Transverse colon (tissue), 4 donors: ENCODE measurements at regions of chr14 and their contacts with region 1.

Region 1: DNA sequence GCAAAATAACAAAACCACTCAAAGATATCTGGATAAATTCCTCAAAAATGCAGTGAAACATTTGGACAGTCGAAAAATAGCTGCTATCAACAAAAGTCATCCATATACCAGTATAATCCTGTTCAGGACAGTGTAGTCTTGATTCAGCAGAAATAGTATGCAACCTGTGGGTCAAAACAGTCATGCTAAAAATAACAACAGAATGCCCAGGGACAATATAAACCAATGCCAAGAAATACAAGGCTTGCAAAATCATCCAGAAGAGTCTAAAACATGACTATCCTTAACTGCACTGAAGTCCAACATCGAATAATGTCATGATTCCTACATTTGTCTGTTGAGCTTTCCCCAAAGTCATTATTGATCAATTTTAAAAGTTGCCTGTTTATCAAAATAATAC is 425.9 kb downstream of the FSCB start:
- DNase-seq: no peak
- H3K4me3 ChIP-seq: no peak overlapping the region
- H3K27ac ChIP-seq: no peak overlapping the region
- H3K4me1 ChIP-seq: no peaks in the 10 kb centered on the region
- H3K27me3 ChIP-seq: no peaks in the 10 kb centered on the region
- CTCF ChIP-seq: no peak
- EP300 ChIP-seq: no peak
- POLR2A ChIP-seq: no peak

Region 2: GRCh38 chr14:42854061-42854460 is 1227.1 kb before region 1 on chr14:
- in situ Hi-C with region 1: no loop called
- intact Hi-C with region 1: loop called (anchors 5 kb)
- DNase-seq: no peak
- H3K4me3 ChIP-seq: no peak overlapping the region
- H3K27ac ChIP-seq: no peak overlapping the region
- H3K4me1 ChIP-seq: no peaks in the 10 kb centered on the region
- H3K27me3 ChIP-seq: no peaks in the 10 kb centered on the region
- CTCF ChIP-seq: no peak
- EP300 ChIP-seq: no peak
- POLR2A ChIP-seq: no peak

Region 3: GRCh38 chr14:44135972-44136371 is 54.8 kb after region 1 on chr14:
- in situ Hi-C with region 1: no loop called
- intact Hi-C with region 1: no loop called
- DNase-seq: no peak
- H3K4me3 ChIP-seq: no peak overlapping the region
- H3K27ac ChIP-seq: no peak overlapping the region
- H3K4me1 ChIP-seq: no peaks in the 10 kb centered on the region
- H3K27me3 ChIP-seq: no peaks in the 10 kb centered on the region
- CTCF ChIP-seq: no peak
- EP300 ChIP-seq: no peak
- POLR2A ChIP-seq: no peak

Region 4: GRCh38 chr14:44180975-44181374 is 99.8 kb after region 1 on chr14:
- in situ Hi-C with region 1: no loop called
- intact Hi-C with region 1: no loop called
- DNase-seq: no peak
- H3K4me3 ChIP-seq: no peak overlapping the region
- H3K27ac ChIP-seq: no peak overlapping the region
- H3K4me1 ChIP-seq: no peaks in the 10 kb centered on the region
- H3K27me3 ChIP-seq: no peaks in the 10 kb centered on the region
- CTCF ChIP-seq: no peak
- EP300 ChIP-seq: no peak
- POLR2A ChIP-seq: no peak

Region 5: DNA sequence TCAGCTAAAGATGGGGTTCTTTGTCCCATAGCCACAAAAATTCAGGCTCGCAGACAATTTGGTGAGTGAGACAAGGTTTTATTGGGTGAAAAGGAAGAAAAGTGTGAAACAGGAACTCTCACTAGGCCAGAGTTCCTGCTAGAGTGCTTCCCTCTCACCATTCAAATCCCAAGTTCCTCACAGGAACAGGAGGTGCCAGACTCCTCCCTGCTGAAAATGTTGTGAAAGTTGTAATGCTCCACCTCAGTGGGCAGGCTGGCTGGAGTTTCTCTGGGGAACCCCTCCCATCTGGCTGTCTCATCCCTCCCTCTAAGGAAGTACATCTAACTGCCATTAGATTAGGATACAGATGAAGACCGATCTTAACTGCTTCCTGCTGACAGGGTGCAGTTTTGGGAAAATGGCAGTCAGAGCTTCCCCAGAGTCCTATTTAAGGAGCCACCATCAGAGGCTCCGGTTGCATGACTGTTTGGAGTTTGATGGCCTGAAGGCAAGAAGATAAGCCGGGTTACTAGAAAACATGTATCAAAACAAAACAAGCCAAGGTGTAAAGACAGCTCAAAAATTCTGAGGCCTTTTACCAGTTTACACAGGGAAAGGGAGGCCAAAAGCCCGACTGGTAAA is 298.3 kb after region 1 on chr14:
- in situ Hi-C with region 1: no loop called
- intact Hi-C with region 1: no loop called
- DNase-seq: no peak
- H3K4me3 ChIP-seq: no peak overlapping the region
- H3K27ac ChIP-seq: no peak overlapping the region
- H3K4me1 ChIP-seq: no peaks in the 10 kb centered on the region
- H3K27me3 ChIP-seq: no peaks in the 10 kb centered on the region
- CTCF ChIP-seq: no peak
- EP300 ChIP-seq: no peak
- POLR2A ChIP-seq: no peak

Region 6: DNA sequence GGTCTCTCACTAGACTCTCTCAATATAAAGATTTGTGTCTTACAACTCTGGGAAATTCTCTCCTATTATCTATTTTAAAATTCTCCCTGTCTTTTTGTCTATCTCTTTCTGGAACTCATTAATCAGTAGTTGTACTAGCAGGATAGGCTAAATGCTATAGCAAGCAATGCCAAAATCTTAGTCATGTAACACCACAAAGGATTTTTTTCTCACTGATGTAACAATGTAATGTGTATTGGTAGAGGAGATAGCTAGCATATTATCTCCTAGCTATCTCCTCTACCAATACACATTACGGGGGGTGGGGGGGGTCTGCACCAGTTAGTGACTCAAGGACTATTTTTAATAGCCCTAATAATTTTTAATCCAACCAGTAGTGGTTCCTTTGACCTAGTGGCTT is 655.2 kb after region 1 on chr14:
- in situ Hi-C with region 1: no loop called
- intact Hi-C with region 1: no loop called
- DNase-seq: no peak
- H3K4me3 ChIP-seq: no peak overlapping the region
- H3K27ac ChIP-seq: no peak overlapping the region
- H3K4me1 ChIP-seq: no peaks in the 10 kb centered on the region
- H3K27me3 ChIP-seq: no peaks in the 10 kb centered on the region
- CTCF ChIP-seq: no peak
- EP300 ChIP-seq: no peak
- POLR2A ChIP-seq: no peak